Sigmoid colon (tissue), 7 donors: ENCODE measurements at regions of chr4 and their contacts with region 1.

Region 1: DNA sequence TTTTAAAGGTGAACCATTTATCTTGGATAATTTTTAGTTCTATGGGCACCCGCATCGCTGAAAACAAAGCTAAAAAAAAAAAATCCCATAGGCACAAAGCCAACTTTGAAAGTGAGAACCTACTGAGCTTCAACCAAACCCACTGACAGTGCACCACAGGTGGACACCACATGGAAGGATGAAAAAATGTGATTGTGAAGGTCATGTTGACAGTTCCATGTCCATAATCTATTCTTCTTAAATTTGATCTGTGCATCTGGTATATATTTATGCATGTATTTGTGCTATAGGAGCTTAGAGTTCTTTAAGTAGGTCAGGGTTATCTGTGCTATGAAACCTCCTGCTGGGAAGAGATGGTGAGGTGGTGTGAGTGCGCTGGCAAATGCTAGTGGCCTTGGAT is 374.3 kb downstream of the SPRY1 start:
- DNase-seq: no peak
- H3K4me3 ChIP-seq: no peak overlapping the region
- H3K27ac ChIP-seq: no peak overlapping the region
- H3K4me1 ChIP-seq: no peaks in the 10 kb centered on the region
- H3K27me3 ChIP-seq: no peaks in the 10 kb centered on the region
- CTCF ChIP-seq: no peak
- EP300 ChIP-seq: no peak
- POLR2A ChIP-seq: no peak

Region 2: GRCh38 chr4:124105212-124105611 is 334.3 kb after region 1 on chr4:
- intact Hi-C with region 1: loop called (anchors 5 kb)
- DNase-seq: no peak
- H3K4me3 ChIP-seq: no peak overlapping the region
- H3K27ac ChIP-seq: no peak overlapping the region
- H3K4me1 ChIP-seq: no peaks in the 10 kb centered on the region
- H3K27me3 ChIP-seq: no peaks in the 10 kb centered on the region
- CTCF ChIP-seq: no peak
- EP300 ChIP-seq: no peak
- POLR2A ChIP-seq: no peak

Region 3: DNA sequence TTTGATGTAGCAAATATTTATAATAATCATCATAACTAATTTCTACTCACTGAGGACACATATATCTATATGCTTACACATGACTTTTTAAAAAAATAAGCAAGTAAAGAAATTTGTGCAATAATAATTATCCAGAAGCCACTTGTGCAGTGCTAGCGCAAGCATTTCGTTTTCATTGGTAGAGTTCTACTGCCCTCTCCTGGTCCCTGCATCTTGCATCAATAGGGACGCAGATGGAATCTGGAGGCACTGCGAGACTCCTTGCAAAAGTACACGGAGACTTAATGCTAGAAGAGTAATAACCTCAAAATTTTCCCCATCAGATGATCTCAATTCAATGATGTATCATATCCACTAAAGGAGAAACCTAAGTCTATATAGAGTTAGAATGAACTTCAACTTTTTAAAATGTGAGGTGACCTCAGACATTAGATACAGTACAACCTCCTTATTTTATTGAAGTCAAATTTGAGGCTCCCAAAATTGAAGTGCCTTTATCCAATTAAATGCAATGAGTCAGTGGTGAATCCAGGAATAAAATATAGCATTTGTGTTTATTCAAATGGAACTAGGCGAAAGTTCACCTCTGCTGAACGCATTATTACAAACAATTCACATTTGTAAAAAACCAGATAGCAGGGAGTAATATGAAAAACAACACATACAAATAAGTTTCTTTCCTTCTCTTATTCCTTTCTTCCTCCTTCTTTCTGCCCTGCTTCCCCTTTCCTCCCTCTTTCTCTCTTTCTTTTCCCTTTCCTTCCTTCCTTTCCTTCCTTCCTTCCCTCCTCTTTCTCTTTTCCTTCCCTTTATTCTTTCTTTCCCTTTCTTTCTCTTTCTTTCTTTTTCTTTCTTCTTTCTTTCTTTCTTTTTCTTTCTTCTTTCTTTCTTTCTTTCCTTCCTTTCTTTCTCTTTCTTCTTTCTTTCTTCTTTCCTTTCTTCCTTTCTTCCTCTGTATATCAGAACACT is 491.6 kb after region 1 on chr4:
- intact Hi-C with region 1: loop called (anchors 5 kb)
- DNase-seq: peak; percentile 79
- H3K4me3 ChIP-seq: no peak overlapping the region
- H3K27ac ChIP-seq: no peak overlapping the region
- H3K4me1 ChIP-seq: peaks cover 0 to 10% (median 7%) of the 10 kb centered on the region in 4 donors
- H3K27me3 ChIP-seq: no peaks in the 10 kb centered on the region
- CTCF ChIP-seq: peak; percentile 60 to 83 (median 62)
- EP300 ChIP-seq: no peak
- POLR2A ChIP-seq: no peak